IMR-90 (cell line): ENCODE measurements at regions of chr19 and their contacts with region 1.

Region 1: DNA sequence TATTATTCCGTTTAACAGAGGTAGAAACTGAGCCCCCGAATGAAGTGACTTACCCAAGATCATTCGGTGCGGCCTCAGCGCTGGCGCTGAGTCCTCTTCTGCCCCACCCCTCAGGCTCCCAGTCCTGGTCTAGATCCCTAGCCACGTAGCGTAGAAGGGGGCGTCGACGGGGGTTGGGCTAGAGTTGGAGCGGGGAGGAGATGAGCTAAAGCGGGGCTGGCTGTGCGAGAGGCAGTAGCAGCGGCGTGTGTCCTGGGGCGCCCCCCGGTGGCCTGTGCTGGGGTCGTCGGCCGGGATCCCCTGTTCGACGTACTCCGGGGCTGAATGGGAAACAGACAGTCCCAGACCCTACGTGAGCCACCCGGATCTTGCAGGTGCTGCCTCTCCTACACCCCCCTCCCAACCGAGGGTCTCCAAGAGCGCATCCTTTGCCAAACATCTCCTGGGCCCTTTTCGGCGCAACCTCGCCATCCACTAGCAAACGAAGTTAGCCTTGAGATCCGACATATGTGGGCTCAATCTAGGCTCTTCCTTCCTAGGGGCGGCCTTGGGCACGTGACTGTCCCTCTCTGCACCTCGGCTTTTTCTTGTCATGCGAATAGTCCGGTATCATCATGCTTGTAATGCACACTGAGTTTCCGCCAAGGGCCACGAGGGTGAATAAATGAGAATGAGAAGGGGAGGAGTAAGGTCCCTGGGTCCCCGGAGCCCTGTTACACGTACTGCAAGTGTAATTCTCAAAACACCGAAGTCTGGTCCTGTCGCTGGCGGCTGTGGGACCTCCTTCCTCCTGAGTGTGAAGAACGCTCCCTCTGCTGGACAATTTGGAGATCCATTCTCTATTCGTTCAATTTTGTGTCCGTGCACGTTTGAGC is 47.7 kb downstream of the CYP4F22 start:
- DNase-seq: peak; percentile 87
- ATAC-seq: peak; percentile 93
- H3K4me3 ChIP-seq: peak overlapping the region; percentile 15; the same call in 1 of the 2 replicates
- H3K27ac ChIP-seq: no peak overlapping the region
- H3K4me1 ChIP-seq: no peaks in the 10 kb centered on the region
- H3K27me3 ChIP-seq: no peaks in the 10 kb centered on the region; the same call in 1 of the 2 replicates
- CTCF ChIP-seq: peak; percentile 90
- POLR2A ChIP-seq: no peak
- RAD21 ChIP-seq: peak; percentile 93

Region 2: DNA sequence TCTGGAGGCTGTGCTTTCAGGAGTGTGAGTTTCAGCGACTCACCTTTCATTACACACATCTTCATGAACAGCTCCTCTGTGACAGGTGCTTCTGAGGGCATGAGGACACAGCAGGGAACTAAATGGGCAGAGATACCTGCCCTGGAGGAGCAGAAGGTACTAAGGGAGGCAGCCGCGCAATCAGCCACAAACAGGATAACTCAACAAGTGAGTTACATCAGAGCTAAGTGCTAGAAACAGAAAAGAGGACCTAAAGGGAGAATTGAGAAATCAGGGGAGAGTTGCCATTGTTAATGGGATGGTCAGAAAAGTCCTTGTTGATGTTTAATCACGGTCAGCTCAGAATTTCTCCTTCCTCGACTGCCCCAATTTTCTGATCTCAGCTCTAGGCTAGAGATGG is 406.3 kb before region 1 on chr19:
- CTCF ChIA-PET with region 1: no interaction called
- POLR2A ChIA-PET with region 1: no interaction called
- dilution Hi-C with region 1: no loop called
- in situ Hi-C with region 1: no loop called
- intact Hi-C with region 1: loop called (anchors 2 kb)
- DNase-seq: no peak
- ATAC-seq: no peak
- H3K4me3 ChIP-seq: no peak overlapping the region
- H3K27ac ChIP-seq: no peak overlapping the region
- H3K4me1 ChIP-seq: peaks cover 1% of the 10 kb centered on the region; the same call in 1 of the 2 replicates
- H3K27me3 ChIP-seq: peaks cover 6% of the 10 kb centered on the region; the same call in 1 of the 2 replicates
- CTCF ChIP-seq: no peak
- POLR2A ChIP-seq: no peak
- RAD21 ChIP-seq: no peak

Region 3: GRCh38 chr19:15177269-15178116 is 378.5 kb before region 1 on chr19:
- CTCF ChIA-PET with region 1: no interaction called
- POLR2A ChIA-PET with region 1: no interaction called
- dilution Hi-C with region 1: no loop called
- in situ Hi-C with region 1: no loop called
- intact Hi-C with region 1: loop called (anchors 1 kb)
- DNase-seq: peak; percentile 64
- ATAC-seq: peak; percentile 99
- H3K4me3 ChIP-seq: no peak overlapping the region
- H3K27ac ChIP-seq: no peak overlapping the region
- H3K4me1 ChIP-seq: peaks cover 2% of the 10 kb centered on the region; the same call in 1 of the 2 replicates
- H3K27me3 ChIP-seq: no peaks in the 10 kb centered on the region
- CTCF ChIP-seq: peak; percentile 98
- POLR2A ChIP-seq: no peak
- RAD21 ChIP-seq: peak; percentile 97

Region 4: GRCh38 chr19:15418588-15419412 is 137.2 kb before region 1 on chr19 and contains the start of gene AKAP8L:
- CTCF ChIA-PET with region 1: interaction called, 3 read pairs
- POLR2A ChIA-PET with region 1: no interaction called
- dilution Hi-C with region 1: no loop called
- in situ Hi-C with region 1: no loop called
- intact Hi-C with region 1: loop called (anchors 1 kb)
- DNase-seq: peak; percentile 100
- ATAC-seq: peak; percentile 95
- H3K4me3 ChIP-seq: peak within 1 kb of the TSS; percentile 69
- H3K27ac ChIP-seq: peak within 1 kb of the TSS; percentile 85
- H3K4me1 ChIP-seq: peaks cover 13% of the 10 kb centered on the region
- H3K27me3 ChIP-seq: no peaks in the 10 kb centered on the region
- CTCF ChIP-seq: peak; percentile 71
- POLR2A ChIP-seq: peak; percentile 90
- RAD21 ChIP-seq: peak; percentile 65
- total RNA-seq, gene AKAP8L: 40.8 and 44.6 TPM in 2 replicates

Region 5: GRCh38 chr19:15449620-15450527 is 106.1 kb before region 1 on chr19 and contains the start of gene WIZ:
- CTCF ChIA-PET with region 1: no interaction called
- POLR2A ChIA-PET with region 1: no interaction called
- dilution Hi-C with region 1: no loop called
- in situ Hi-C with region 1: no loop called
- intact Hi-C with region 1: loop called (anchors 10 kb)
- DNase-seq: peak; percentile 55
- ATAC-seq: peak; percentile 80
- H3K4me3 ChIP-seq: peak within 1 kb of the TSS; percentile 71
- H3K27ac ChIP-seq: peak within 1 kb of the TSS; percentile 7; the same call in 1 of the 2 replicates
- H3K4me1 ChIP-seq: peaks cover 7% of the 10 kb centered on the region; the same call in 1 of the 2 replicates
- H3K27me3 ChIP-seq: peaks cover 2% of the 10 kb centered on the region; the same call in 1 of the 2 replicates
- CTCF ChIP-seq: no peak
- POLR2A ChIP-seq: no peak; the same call in 1 of the 2 replicates
- RAD21 ChIP-seq: no peak
- total RNA-seq, gene WIZ: 0.90 and 1.1 TPM in 2 replicates